Left colon (tissue), 2 donors: ENCODE measurements at regions of chr4 and their contacts with region 1.

Region 1: DNA sequence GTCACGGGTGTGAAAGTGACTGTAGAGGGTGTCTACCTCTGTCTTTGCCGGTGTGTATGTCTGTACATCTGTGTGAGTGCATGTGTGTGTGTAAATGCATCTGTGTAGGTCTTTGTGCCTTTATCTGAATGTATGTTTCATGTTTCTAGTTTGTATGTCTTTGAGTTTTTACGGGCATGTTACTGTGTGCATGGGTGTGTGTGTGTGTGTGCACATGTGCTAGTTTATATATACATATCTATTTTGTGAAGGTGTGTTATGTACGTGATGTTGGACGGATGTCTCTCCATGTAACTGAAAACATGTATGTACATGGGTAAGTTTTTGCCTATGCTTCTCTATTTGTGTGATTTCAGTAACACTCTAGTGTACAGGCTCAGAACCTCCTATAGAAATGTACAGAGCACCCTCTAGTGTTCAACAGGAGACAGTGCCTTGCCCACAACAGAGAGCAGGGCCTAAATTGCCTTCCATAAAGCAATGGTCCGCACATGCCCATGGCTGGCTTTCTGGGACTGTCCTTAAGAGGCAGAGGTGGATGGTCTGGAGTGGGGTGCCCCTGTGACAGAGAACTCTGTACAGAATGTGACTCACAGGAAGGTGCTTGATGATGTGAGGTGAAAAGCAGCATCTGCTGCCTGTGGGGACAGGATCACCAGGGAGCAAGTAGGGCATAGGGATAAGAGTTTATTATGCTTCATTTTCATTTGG is 343.5 kb downstream of the RAPGEF2 start:
- DNase-seq: peak in 1 of 2 donors; percentile 18
- ATAC-seq: peak; percentile 93

Region 2: GRCh38 chr4:159206427-159206871 is 240.0 kb before region 1 on chr4:
- intact Hi-C with region 1: loop called in 1 of 2 experiments (anchors 10 kb)
- DNase-seq: no peak
- ATAC-seq: no peak